ENCODE measurements at regions of chr12 and their contacts with region 1.

Region 1: GRCh38 chr12:130871286-130872178 is at the start of gene RAN:
- DNase-seq: peak; percentile 92 to 94
- H3K4me3 ChIP-seq: peak within 1 kb of the TSS; percentile 91
- H3K4me3 Mint-ChIP-seq: peak within 1 kb of the TSS; percentile 90
- H3K27ac Mint-ChIP-seq: peak within 1 kb of the TSS; percentile 94
- H3K4me1 ChIP-seq: peaks cover 28% of the 10 kb centered on the region
- H3K4me1 Mint-ChIP-seq: peaks cover 15% of the 10 kb centered on the region
- H3K27me3 ChIP-seq: no peaks in the 10 kb centered on the region
- H3K27me3 Mint-ChIP-seq: no peaks in the 10 kb centered on the region
- CTCF ChIP-seq: no peak
- total RNA-seq, gene RAN: 1,310 and 1,315 TPM in 2 replicates

Region 2: GRCh38 chr12:130838951-130839769 is 32.4 kb before region 1 on chr12 and contains the start of gene STX2:
- CTCF ChIA-PET with region 1: interaction called, 4 read pairs
- POLR2A ChIA-PET with region 1: no interaction called
- intact Hi-C with region 1: loop called (anchors 5 kb)
- DNase-seq: peak; percentile 78 to 91
- H3K4me3 ChIP-seq: peak within 1 kb of the TSS; percentile 42
- H3K4me3 Mint-ChIP-seq: peak within 1 kb of the TSS; percentile 69
- H3K27ac Mint-ChIP-seq: peak within 1 kb of the TSS; percentile 53
- H3K4me1 ChIP-seq: peaks cover 6% of the 10 kb centered on the region
- H3K4me1 Mint-ChIP-seq: peaks cover 7% of the 10 kb centered on the region
- H3K27me3 ChIP-seq: no peaks in the 10 kb centered on the region
- H3K27me3 Mint-ChIP-seq: no peaks in the 10 kb centered on the region
- CTCF ChIP-seq: peak; percentile 28 to 37
- total RNA-seq, gene STX2: 11.2 and 12.6 TPM in 2 replicates

Region 3: GRCh38 chr12:130849561-130850417 is 21.7 kb before region 1 on chr12:
- CTCF ChIA-PET with region 1: interaction called, 4 read pairs
- POLR2A ChIA-PET with region 1: interaction called, 7 read pairs
- intact Hi-C with region 1: loop called (anchors 1 kb)
- DNase-seq: peak; percentile 85 to 88
- H3K4me3 ChIP-seq: no peak overlapping the region
- H3K4me3 Mint-ChIP-seq: peak overlapping the region; percentile 14
- H3K27ac Mint-ChIP-seq: peak overlapping the region; percentile 42
- H3K4me1 ChIP-seq: peaks cover 20% of the 10 kb centered on the region
- H3K4me1 Mint-ChIP-seq: peaks cover 13% of the 10 kb centered on the region
- H3K27me3 ChIP-seq: no peaks in the 10 kb centered on the region
- H3K27me3 Mint-ChIP-seq: no peaks in the 10 kb centered on the region
- CTCF ChIP-seq: no peak

Measured in Caco-2 (cell line).